Right ventricle myocardium superior (tissue), 1 donor: ENCODE measurements at regions of chr3 and their contacts with region 1.

Region 1: GRCh38 chr3:56997675-56998074 is 62.8 kb upstream of the SPATA12 start:
- DNase-seq: no peak
- ATAC-seq: peak; percentile 10

Region 2: GRCh38 chr3:57078344-57078634 is 80.6 kb after region 1 on chr3:
- intact Hi-C with region 1: loop called (anchors 5 kb)
- DNase-seq: no peak
- ATAC-seq: peak; percentile 68

Region 3: DNA sequence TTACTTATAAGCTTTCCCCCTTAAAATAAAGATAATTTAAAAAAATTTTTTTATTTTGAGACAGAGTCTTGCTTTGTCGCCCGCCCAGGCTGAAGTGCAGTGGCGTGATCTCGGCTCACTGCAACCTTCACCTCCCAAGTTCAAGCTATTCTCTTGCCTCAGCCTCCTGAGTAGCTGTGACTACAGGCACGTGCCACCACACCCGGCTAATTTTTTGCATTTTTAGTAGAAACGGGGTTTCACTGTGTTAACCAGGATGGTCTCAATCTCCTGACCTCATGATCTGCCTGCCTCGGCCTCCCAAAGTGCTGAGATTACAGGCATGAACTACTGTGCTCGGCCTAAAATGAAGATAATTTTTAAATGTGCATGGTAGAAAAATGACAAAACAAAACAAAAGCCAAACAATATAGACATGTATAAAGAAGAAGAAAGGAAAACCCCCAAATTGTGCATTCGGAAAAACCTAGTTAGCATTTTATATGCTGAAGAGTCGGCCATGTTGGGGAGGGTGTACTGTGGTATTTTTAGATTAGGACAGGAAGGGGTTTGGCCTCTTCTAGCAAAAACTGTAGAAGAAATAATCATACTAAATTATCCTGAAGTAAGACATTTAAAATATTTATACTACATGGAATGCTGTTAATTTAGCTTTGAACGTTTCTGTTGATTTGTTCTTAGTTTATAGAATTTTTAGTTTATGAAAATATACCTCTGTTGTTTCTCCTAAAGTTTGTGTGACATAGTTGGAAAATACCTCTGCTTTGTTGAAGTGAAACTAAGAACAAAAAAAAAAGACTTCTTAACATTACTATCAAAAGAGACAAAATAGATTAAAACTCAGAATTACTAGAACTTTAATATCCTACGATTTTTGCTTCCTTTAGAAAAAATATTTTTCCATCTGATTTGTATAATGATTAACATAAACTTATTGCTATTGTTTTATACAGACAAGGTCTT is 237.2 kb after region 1 on chr3:
- intact Hi-C with region 1: no loop called
- DNase-seq: no peak
- ATAC-seq: no peak

Region 4: GRCh38 chr3:57331078-57331610 is 333.5 kb after region 1 on chr3:
- intact Hi-C with region 1: no loop called
- DNase-seq: no peak
- ATAC-seq: no peak